GM12878 (cell line): ENCODE measurements at regions of chr11 and their contacts with region 1.

Region 1: DNA sequence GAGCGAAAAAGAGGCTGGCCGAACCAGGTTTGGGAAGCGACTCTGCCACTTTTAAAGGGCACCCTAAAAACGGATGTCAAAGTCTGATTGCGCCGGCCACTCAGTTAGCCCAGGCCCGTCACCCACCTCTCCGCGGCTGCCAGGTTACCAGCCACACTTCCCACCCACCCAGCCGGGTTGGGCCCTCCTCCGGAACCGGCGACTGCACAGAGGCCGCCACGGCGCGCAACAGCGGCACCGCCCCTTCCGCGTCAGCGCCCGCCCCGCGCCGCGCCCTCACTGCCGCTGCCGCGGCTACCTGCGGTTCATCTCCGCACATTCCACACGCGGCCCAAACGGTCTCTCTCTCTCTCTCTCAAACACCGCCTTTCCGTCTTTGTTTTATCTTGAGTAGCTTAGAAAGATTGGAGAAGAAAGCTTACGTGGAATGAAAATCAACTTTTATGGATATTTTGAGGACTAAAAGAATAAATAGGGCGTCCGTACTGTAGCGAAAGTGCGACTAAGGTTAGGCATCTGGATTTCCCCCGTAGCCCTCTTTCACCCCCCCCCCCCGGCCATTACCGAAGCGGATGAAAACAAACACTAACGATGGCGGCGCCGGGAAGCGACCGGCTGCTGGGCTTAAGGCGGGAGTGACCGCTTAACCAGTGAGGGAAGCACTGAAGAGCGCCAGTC is at the starts of genes ATG13 and HARBI1:
- DNase-seq: peak; percentile 55
- ATAC-seq: peak; percentile 98
- H3K4me3 ChIP-seq: peak within 1 kb of the TSS; percentile 82
- H3K27ac ChIP-seq: peak within 1 kb of the TSS; percentile 99
- H3K4me1 ChIP-seq: peaks cover 7% of the 10 kb centered on the region; the same call in 1 of the 2 replicates
- H3K27me3 ChIP-seq: no peaks in the 10 kb centered on the region
- CTCF ChIP-seq: no peak
- EP300 ChIP-seq: peak in 1 of 2 experiments; percentile 100; a peak in 2 of 4 replicates
- POLR2A ChIP-seq: peak; percentile 85
- RAD21 ChIP-seq: no peak
- polyA plus RNA-seq, gene ATG13: 10.9 to 13.6 TPM
- polyA plus RNA-seq, gene HARBI1: 5.1 to 7.5 TPM

Region 2: DNA sequence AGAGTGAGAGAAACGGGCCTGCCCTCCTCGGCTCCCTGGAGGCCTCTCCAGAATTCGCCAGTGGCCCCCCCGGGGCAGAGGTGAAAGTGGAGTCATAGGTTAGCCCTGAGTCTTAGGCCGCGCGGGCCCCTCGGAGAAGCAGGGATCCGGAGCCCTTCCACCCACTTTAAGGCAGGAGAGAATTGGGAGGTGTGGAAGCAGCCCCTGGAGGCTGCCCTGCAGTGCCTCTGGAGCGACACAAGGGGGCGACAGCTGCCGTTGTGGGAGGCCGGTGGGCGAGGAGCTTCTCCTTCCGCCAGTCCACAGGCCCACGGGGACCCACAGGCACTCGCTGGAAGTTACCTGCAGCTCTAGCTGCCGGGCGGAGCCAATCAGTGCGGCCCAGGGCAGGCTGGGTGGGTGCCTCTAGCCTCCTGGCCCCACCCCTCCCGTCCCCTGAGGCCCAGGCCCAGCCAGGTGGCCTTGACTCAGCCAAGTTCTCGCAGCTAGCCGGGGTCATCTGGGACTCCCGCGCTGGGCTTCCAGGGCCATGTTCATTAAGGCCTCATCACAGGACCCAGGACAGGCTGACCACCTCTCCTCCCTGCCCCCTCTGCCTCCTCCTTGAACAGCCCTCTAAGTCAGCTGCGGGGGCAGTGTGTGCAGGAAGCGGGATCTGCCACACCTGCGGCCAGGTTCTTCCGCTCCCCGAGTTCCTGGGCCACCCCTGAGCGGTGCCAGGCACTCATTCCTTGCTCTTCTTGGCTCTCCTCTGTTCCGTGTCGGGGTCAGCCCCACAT is 264.9 kb before region 1 on chr11:
- CTCF ChIA-PET with region 1: interaction called, 14 read pairs
- POLR2A ChIA-PET with region 1: no interaction called
- RAD21 ChIA-PET with region 1: interaction called, 3 read pairs
- SMC1A ChIA-PET with region 1: no interaction called
- in situ Hi-C with region 1: no loop called
- intact Hi-C with region 1: no loop called
- DNase-seq: no peak
- ATAC-seq: peak; percentile 29
- H3K4me3 ChIP-seq: no peak overlapping the region
- H3K27ac ChIP-seq: no peak overlapping the region
- H3K4me1 ChIP-seq: peaks cover 30% of the 10 kb centered on the region
- H3K27me3 ChIP-seq: no peaks in the 10 kb centered on the region
- CTCF ChIP-seq: peak; percentile 86 to 97 (median 87)
- EP300 ChIP-seq: no peak
- POLR2A ChIP-seq: no peak
- RAD21 ChIP-seq: peak; percentile 50

Region 3: GRCh38 chr11:46537537-46538295 is 79.4 kb before region 1 on chr11:
- CTCF ChIA-PET with region 1: interaction called, 9 read pairs
- POLR2A ChIA-PET with region 1: interaction called, 3 read pairs
- RAD21 ChIA-PET with region 1: interaction called, 6 read pairs
- SMC1A ChIA-PET with region 1: interaction called, 10 read pairs
- in situ Hi-C with region 1: no loop called
- intact Hi-C with region 1: no loop called
- DNase-seq: no peak
- ATAC-seq: peak; percentile 99
- H3K4me3 ChIP-seq: no peak overlapping the region
- H3K27ac ChIP-seq: no peak overlapping the region
- H3K4me1 ChIP-seq: no peaks in the 10 kb centered on the region
- H3K27me3 ChIP-seq: no peaks in the 10 kb centered on the region
- CTCF ChIP-seq: peak; percentile 90 to 95 (median 93); a peak in 5 of 6 replicates
- EP300 ChIP-seq: no peak
- POLR2A ChIP-seq: no peak
- RAD21 ChIP-seq: peak; percentile 95

Region 4: DNA sequence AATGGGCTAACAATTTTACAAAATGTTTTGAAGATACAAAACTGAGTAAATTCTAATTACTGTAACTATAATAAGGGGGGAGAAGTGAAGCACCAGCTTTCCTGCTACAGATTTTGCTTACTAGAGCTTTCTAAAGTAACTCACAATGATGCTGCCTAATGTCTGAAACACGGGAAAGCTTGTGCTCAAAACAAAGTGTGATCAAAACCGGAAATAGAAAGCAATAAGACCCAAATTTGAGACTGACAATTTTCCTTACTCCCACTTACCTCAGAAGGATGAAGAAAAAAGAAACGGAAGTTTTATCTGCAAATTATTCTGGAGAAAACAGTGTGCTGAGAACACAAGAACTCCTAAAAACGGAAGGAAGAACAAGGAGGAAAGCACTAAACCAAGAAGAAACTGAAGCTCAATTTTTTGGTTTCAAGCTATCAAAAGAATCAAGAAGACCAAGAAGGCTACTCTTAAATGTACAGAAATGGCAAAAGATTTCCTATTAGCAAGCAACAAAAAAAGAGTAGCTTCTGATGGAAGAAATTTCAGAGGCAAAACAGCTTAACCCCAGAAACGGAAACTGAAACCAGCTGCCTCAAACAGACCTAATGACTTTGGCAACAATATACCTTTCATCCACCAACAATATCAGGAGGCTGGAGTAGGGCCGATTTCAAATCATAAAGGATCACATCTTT is 56.7 kb before region 1 on chr11:
- CTCF ChIA-PET with region 1: interaction called, 29 read pairs
- POLR2A ChIA-PET with region 1: interaction called, 11 read pairs
- RAD21 ChIA-PET with region 1: interaction called, 20 read pairs
- SMC1A ChIA-PET with region 1: interaction called, 34 read pairs
- in situ Hi-C with region 1: no loop called
- intact Hi-C with region 1: loop called (anchors 2 kb)
- DNase-seq: peak; percentile 33
- ATAC-seq: peak; percentile 86
- H3K4me3 ChIP-seq: peak overlapping the region; percentile 64
- H3K27ac ChIP-seq: peak overlapping the region; percentile 66
- H3K4me1 ChIP-seq: peaks cover 4% of the 10 kb centered on the region
- H3K27me3 ChIP-seq: no peaks in the 10 kb centered on the region
- CTCF ChIP-seq: no peak
- EP300 ChIP-seq: no peak
- POLR2A ChIP-seq: no peak
- RAD21 ChIP-seq: no peak

Region 5: GRCh38 chr11:46628961-46629360 is 11.8 kb after region 1 on chr11:
- CTCF ChIA-PET with region 1: interaction called, 19 read pairs
- POLR2A ChIA-PET with region 1: interaction called, 4 read pairs
- RAD21 ChIA-PET with region 1: no interaction called
- SMC1A ChIA-PET with region 1: interaction called, 8 read pairs
- in situ Hi-C with region 1: no loop called
- intact Hi-C with region 1: no loop called
- DNase-seq: no peak
- ATAC-seq: no peak
- H3K4me3 ChIP-seq: no peak overlapping the region
- H3K27ac ChIP-seq: no peak overlapping the region
- H3K4me1 ChIP-seq: no peaks in the 10 kb centered on the region
- H3K27me3 ChIP-seq: no peaks in the 10 kb centered on the region
- CTCF ChIP-seq: no peak
- EP300 ChIP-seq: no peak
- POLR2A ChIP-seq: no peak
- RAD21 ChIP-seq: no peak

Region 6: GRCh38 chr11:46675288-46675851 is 58.2 kb after region 1 on chr11:
- CTCF ChIA-PET with region 1: no interaction called
- POLR2A ChIA-PET with region 1: no interaction called
- RAD21 ChIA-PET with region 1: no interaction called
- SMC1A ChIA-PET with region 1: no interaction called
- in situ Hi-C with region 1: no loop called
- intact Hi-C with region 1: no loop called
- DNase-seq: no peak
- ATAC-seq: no peak
- H3K4me3 ChIP-seq: no peak overlapping the region
- H3K27ac ChIP-seq: no peak overlapping the region
- H3K4me1 ChIP-seq: no peaks in the 10 kb centered on the region
- H3K27me3 ChIP-seq: no peaks in the 10 kb centered on the region
- CTCF ChIP-seq: no peak
- EP300 ChIP-seq: no peak
- POLR2A ChIP-seq: peak; percentile 18; the same call in 1 of the 2 replicates
- RAD21 ChIP-seq: no peak